Mammary epithelial cell (primary cell): ENCODE measurements at regions of chr2 and their contacts with region 1.

Region 1: GRCh38 chr2:135004005-135004746 is 43.1 kb downstream of the MAP3K19 start:
- DNase-seq: peak; percentile 57
- H3K4me3 ChIP-seq: no peak overlapping the region
- H3K27ac ChIP-seq: no peak overlapping the region
- H3K4me1 ChIP-seq: no peaks in the 10 kb centered on the region
- H3K27me3 ChIP-seq: no peaks in the 10 kb centered on the region
- CTCF ChIP-seq: peak; percentile 90 to 97

Region 2: DNA sequence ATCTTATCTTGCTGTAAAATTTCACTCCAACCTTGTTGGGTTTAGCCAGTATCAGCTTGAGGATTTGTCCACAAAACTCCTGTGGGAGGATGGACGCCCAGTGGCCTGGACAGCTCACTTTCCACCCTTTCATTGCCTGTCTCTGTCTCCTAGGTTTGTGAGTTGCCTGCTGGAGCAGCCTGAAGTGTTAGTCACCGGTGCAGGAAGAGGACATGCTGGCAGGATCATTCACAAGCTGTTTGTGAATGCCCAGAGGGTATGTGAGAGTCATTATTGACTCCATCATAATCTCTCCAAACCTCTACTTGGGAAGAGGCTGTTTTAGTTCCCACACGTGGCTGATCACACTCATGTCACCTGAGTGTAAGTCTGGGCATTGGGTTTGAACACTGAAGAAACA is 160.3 kb after region 1 on chr2:
- CTCF ChIA-PET with region 1: interaction called, 3 read pairs
- dilution Hi-C with region 1: no loop called
- in situ Hi-C with region 1: no loop called
- intact Hi-C with region 1: loop called (anchors 10 kb)
- DNase-seq: peak; percentile 95
- H3K4me3 ChIP-seq: no peak overlapping the region
- H3K27ac ChIP-seq: peak overlapping the region; percentile 51
- H3K4me1 ChIP-seq: peaks cover 18% of the 10 kb centered on the region
- H3K27me3 ChIP-seq: no peaks in the 10 kb centered on the region
- CTCF ChIP-seq: peak in 1 of 2 donors; percentile 2

Region 3: DNA sequence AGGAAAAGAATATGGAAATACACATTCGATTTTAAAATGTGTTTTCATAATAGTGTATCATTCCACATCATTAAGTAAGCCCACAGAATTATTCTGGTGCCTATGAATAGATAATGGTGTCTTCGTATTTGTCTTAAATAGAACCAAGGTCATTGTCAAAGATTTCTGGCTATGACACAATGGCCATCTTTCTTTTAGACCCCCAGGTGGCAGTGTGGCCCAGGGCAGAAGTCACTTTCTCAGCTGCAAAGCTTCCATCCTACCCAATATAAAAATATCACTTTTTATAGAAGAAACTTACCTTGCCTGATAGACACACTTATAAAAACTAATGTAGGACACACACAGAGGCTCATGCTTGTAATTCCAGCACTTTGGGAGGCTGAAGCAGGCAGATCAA is 469.4 kb after region 1 on chr2:
- CTCF ChIA-PET with region 1: interaction called, 4 read pairs
- dilution Hi-C with region 1: no loop called
- in situ Hi-C with region 1: no loop called
- intact Hi-C with region 1: loop called (anchors 1 kb)
- DNase-seq: peak; percentile 3
- H3K4me3 ChIP-seq: no peak overlapping the region
- H3K27ac ChIP-seq: no peak overlapping the region
- H3K4me1 ChIP-seq: no peaks in the 10 kb centered on the region
- H3K27me3 ChIP-seq: no peaks in the 10 kb centered on the region
- CTCF ChIP-seq: peak; percentile 26 to 51

Region 4: GRCh38 chr2:135600915-135601314 is 596.7 kb after region 1 on chr2:
- CTCF ChIA-PET with region 1: no interaction called
- dilution Hi-C with region 1: no loop called
- in situ Hi-C with region 1: no loop called
- intact Hi-C with region 1: loop called (anchors 1 kb)
- DNase-seq: no peak
- H3K4me3 ChIP-seq: no peak overlapping the region
- H3K27ac ChIP-seq: no peak overlapping the region
- H3K4me1 ChIP-seq: peaks cover 3% of the 10 kb centered on the region
- H3K27me3 ChIP-seq: no peaks in the 10 kb centered on the region
- CTCF ChIP-seq: no peak

Region 5: GRCh38 chr2:135741395-135742324 is 737.5 kb after region 1 on chr2 and contains the start of gene UBXN4:
- CTCF ChIA-PET with region 1: no interaction called
- dilution Hi-C with region 1: no loop called
- in situ Hi-C with region 1: no loop called
- intact Hi-C with region 1: loop called (anchors 1 kb)
- DNase-seq: peak; percentile 99
- H3K4me3 ChIP-seq: peak within 1 kb of the TSS; percentile 72 to 97 (median 94)
- H3K27ac ChIP-seq: peak within 1 kb of the TSS; percentile 91
- H3K4me1 ChIP-seq: peaks cover 19% of the 10 kb centered on the region
- H3K27me3 ChIP-seq: no peaks in the 10 kb centered on the region
- CTCF ChIP-seq: peak; percentile 34 to 43
- total RNA-seq, gene UBXN4: 72.2 to 72.9 TPM

Region 6: DNA sequence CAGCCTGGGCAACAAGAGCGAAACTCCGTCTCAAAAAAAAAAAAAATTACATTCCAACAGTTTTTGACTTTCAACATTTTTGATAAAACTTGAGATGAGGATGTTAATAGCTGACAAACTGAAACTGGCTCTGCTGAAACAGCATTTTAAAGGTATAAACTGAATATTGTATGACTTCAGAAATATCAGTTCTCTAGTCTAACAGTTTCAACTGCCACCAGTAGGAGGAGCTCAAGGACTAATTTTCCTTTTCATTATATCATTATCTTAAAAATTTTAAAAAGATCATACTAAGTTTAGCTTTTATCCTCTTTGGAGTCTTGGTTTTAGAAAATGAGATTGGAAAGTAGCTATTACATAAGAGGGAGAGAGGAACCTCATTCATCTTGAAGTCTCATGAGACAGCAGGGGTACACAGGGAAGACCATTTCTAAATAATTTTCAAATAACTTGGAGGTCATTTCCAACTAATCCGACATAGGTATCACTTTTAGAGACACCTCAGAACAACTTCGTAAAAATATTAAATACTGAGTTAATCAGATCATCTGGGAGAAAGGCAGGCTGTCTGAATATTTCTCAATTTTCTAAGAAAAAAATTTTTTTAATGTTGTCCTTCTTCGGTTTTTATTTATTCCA is 909.7 kb after region 1 on chr2:
- CTCF ChIA-PET with region 1: no interaction called
- dilution Hi-C with region 1: no loop called
- in situ Hi-C with region 1: no loop called
- intact Hi-C with region 1: loop called (anchors 1 kb)
- DNase-seq: peak; percentile 15
- H3K4me3 ChIP-seq: no peak overlapping the region
- H3K27ac ChIP-seq: no peak overlapping the region
- H3K4me1 ChIP-seq: no peaks in the 10 kb centered on the region
- H3K27me3 ChIP-seq: no peaks in the 10 kb centered on the region
- CTCF ChIP-seq: peak; percentile 58 to 70